ENCODE measurements at regions of chr1 and their contacts with region 1.

Region 1: GRCh38 chr1:1539310-1540089 is 924 bp downstream of the TMEM240 start:
- DNase-seq: no peak
- H3K4me3 ChIP-seq: no peak overlapping the region
- H3K27ac ChIP-seq: no peak overlapping the region
- H3K4me1 ChIP-seq: no peaks in the 10 kb centered on the region
- CTCF ChIP-seq: no peak

Region 2: DNA sequence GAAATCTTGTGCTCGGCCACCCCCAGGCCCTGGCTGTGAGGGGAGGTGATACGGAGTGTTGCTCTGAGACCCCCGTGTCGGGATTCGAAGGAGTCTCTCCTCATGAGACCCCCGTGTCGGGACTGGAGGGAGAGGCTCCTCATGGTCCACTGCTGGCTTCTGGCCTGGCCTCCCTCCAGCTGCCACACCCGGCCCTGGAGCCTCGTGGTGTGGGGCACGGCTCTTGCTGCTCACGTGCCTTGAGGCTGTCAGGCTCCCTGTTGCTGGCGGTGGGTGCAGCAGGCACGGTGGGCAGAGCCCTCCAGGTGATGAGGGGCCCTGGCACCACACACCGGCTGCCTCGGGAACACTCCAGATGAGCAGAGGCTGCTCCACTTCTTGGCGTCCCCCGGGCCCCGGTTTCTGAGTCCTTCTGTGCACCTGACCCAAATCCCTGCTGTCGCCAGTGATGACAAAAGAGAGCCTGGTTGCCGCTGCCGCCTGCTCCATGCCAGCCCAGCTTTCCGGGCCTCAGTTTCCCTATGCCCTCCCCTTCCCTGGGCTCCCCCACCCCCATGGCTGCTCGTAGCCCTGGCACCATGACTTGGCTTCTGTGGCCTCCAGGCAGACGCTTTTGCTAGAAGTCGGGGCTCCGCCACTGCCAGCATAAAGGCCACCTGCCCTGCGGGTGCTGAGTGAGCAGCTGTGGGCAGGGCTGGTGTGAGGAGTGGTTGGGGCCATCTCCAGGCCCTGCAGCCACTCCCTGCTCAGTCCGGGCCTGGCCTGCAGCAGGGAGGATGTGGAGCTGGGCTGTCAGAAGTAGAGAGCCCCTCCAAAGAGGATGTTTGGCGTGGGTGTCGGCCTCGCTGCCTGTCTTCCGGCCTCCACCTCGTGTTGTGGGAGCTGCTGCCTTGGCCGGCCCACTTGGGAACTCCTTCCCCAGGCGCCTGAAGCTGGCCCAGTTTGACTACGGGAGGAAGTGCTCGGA is 10.9 kb before region 1 on chr1:
- CTCF ChIA-PET with region 1: no interaction called
- POLR2A ChIA-PET with region 1: no interaction called
- intact Hi-C with region 1: no loop called
- DNase-seq: no peak
- H3K4me3 ChIP-seq: no peak overlapping the region
- H3K27ac ChIP-seq: no peak overlapping the region
- H3K4me1 ChIP-seq: no peaks in the 10 kb centered on the region
- CTCF ChIP-seq: no peak

Region 3: GRCh38 chr1:1550591-1551432 is 11.3 kb after region 1 on chr1:
- CTCF ChIA-PET with region 1: no interaction called
- POLR2A ChIA-PET with region 1: no interaction called
- intact Hi-C with region 1: no loop called
- DNase-seq: no peak
- H3K4me3 ChIP-seq: no peak overlapping the region
- H3K27ac ChIP-seq: no peak overlapping the region
- H3K4me1 ChIP-seq: no peaks in the 10 kb centered on the region
- CTCF ChIP-seq: peak; percentile 55; the same call in 1 of the 2 replicates

Region 4: GRCh38 chr1:1591452-1591851 is 52.0 kb after region 1 on chr1:
- CTCF ChIA-PET with region 1: interaction called, 12 read pairs
- POLR2A ChIA-PET with region 1: no interaction called
- intact Hi-C with region 1: no loop called
- DNase-seq: no peak
- H3K4me3 ChIP-seq: no peak overlapping the region
- H3K27ac ChIP-seq: no peak overlapping the region
- H3K4me1 ChIP-seq: no peaks in the 10 kb centered on the region
- CTCF ChIP-seq: no peak

Region 5: GRCh38 chr1:1703796-1704195 is 164.3 kb after region 1 on chr1:
- CTCF ChIA-PET with region 1: no interaction called
- POLR2A ChIA-PET with region 1: no interaction called
- intact Hi-C with region 1: no loop called
- DNase-seq: no peak
- H3K4me3 ChIP-seq: no peak overlapping the region
- H3K27ac ChIP-seq: no peak overlapping the region
- H3K4me1 ChIP-seq: no peaks in the 10 kb centered on the region
- CTCF ChIP-seq: no peak

Measured in OCI-LY7 (cell line).